ENCODE measurements at regions of chr16 and their contacts with region 1.

Region 1: GRCh38 chr16:82835487-82836155 is 208.9 kb downstream of the CDH13 start:
- DNase-seq: no peak
- H3K4me3 ChIP-seq: no peak overlapping the region
- H3K27ac ChIP-seq: no peak overlapping the region
- H3K4me1 ChIP-seq: no peaks in the 10 kb centered on the region
- H3K27me3 ChIP-seq: no peaks in the 10 kb centered on the region
- CTCF ChIP-seq: no peak
- POLR2A ChIP-seq: no peak

Region 2: DNA sequence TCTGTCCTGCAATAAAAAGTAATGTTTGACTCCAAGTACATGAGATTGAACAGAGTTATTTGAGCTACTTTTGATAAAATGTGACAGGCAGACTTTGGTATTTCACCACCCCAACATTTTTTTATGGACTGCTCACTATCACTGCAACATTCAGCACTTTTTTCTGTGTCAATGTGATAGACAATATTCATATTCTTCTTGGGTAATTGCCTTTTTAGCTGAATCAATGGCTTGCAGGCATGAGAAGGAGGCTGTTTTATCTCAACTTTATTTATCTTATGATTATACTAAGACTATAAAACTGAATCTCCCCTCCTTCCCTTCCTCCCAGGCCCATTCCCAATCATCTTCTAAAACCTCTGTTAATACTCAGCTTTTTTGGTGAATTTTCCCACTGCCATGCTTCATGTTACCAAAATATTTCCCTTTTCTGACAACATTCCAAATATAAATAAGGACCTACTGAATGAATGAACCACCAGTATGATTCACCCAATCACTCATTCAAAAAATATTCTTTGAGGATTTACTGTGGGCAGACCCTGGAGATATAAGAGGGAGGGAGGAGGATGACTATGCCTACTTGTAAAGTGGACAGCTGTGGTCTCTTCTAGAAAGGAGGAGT is 141.3 kb before region 1 on chr16:
- intact Hi-C with region 1: no loop called
- DNase-seq: no peak
- H3K4me3 ChIP-seq: no peak overlapping the region
- H3K27ac ChIP-seq: no peak overlapping the region
- H3K4me1 ChIP-seq: no peaks in the 10 kb centered on the region
- H3K27me3 ChIP-seq: no peaks in the 10 kb centered on the region
- CTCF ChIP-seq: no peak
- POLR2A ChIP-seq: no peak

Region 3: GRCh38 chr16:82814059-82814458 is 21.6 kb before region 1 on chr16:
- intact Hi-C with region 1: no loop called
- DNase-seq: no peak
- H3K4me3 ChIP-seq: no peak overlapping the region
- H3K27ac ChIP-seq: no peak overlapping the region
- H3K4me1 ChIP-seq: no peaks in the 10 kb centered on the region
- H3K27me3 ChIP-seq: no peaks in the 10 kb centered on the region
- CTCF ChIP-seq: no peak
- POLR2A ChIP-seq: no peak

Region 4: GRCh38 chr16:82867485-82867884 is 31.9 kb after region 1 on chr16:
- intact Hi-C with region 1: loop called (anchors 2 kb)
- DNase-seq: no peak
- H3K4me3 ChIP-seq: no peak overlapping the region
- H3K27ac ChIP-seq: no peak overlapping the region
- H3K4me1 ChIP-seq: no peaks in the 10 kb centered on the region
- H3K27me3 ChIP-seq: no peaks in the 10 kb centered on the region
- CTCF ChIP-seq: no peak
- POLR2A ChIP-seq: no peak

Measured in breast epithelium (tissue), 4 donors.